ENCODE measurements at regions of chr17 and their contacts with region 1.

Region 1: DNA sequence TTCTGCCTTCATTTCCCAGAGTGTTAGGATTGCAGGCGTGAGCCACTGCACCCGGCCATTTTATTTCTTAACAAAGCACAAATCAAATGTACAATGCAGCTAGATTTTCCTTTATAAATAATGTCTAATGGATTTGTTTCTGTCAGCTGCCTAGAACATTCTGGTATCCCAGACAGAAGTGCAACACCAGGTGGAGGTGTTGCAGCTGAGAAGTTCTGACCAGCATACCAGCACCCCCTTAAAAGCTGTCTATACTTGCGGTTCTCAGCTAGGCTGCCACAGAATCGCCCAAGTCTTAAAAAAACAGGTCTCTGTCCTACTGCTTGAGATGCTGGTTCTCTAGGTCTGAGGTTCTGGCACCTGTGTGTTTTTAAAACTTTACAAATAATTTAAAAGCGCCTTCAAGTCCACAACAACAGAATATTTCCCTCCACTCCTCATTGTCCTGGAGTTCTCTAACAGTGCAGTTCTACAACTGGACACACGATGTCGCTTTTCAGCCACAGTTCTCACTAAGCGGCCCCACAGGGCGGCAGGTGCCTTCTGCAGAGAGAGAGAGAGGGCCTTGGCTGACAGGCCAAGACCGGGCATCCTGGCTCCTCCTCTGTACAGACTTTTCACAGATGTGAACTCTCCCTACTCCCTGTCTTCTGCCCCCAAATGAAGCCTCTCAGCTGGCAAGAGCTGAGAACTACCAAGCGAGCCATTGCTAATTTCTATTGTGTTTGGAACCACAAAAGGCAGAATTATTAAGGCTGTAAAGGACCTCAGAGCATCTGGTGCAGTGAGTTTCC is 32.6 kb upstream of the MEOX1 start:
- DNase-seq: no peak
- ATAC-seq: peak; percentile 92
- H3K4me3 ChIP-seq: no peak overlapping the region
- H3K27ac ChIP-seq: no peak overlapping the region
- H3K4me1 ChIP-seq: no peaks in the 10 kb centered on the region
- H3K27me3 ChIP-seq: peaks cover 0 to 2% of the 10 kb centered on the region in 2 experiments; a peak in 1 of 4 replicates
- CTCF ChIP-seq: peak; percentile 84 to 98 (median 92); a peak in 5 of 6 replicates
- EP300 ChIP-seq: no peak
- POLR2A ChIP-seq: no peak
- RAD21 ChIP-seq: peak; percentile 99

Region 2: GRCh38 chr17:43530278-43531081 is 163.8 kb before region 1 on chr17:
- CTCF ChIA-PET with region 1: no interaction called
- POLR2A ChIA-PET with region 1: no interaction called
- RAD21 ChIA-PET with region 1: no interaction called
- SMC1A ChIA-PET with region 1: no interaction called
- in situ Hi-C with region 1: no loop called
- intact Hi-C with region 1: no loop called
- DNase-seq: no peak
- ATAC-seq: no peak
- H3K4me3 ChIP-seq: no peak overlapping the region
- H3K27ac ChIP-seq: no peak overlapping the region
- H3K4me1 ChIP-seq: no peaks in the 10 kb centered on the region
- H3K27me3 ChIP-seq: no peaks in the 10 kb centered on the region
- CTCF ChIP-seq: no peak
- EP300 ChIP-seq: no peak
- POLR2A ChIP-seq: no peak
- RAD21 ChIP-seq: no peak

Region 3: DNA sequence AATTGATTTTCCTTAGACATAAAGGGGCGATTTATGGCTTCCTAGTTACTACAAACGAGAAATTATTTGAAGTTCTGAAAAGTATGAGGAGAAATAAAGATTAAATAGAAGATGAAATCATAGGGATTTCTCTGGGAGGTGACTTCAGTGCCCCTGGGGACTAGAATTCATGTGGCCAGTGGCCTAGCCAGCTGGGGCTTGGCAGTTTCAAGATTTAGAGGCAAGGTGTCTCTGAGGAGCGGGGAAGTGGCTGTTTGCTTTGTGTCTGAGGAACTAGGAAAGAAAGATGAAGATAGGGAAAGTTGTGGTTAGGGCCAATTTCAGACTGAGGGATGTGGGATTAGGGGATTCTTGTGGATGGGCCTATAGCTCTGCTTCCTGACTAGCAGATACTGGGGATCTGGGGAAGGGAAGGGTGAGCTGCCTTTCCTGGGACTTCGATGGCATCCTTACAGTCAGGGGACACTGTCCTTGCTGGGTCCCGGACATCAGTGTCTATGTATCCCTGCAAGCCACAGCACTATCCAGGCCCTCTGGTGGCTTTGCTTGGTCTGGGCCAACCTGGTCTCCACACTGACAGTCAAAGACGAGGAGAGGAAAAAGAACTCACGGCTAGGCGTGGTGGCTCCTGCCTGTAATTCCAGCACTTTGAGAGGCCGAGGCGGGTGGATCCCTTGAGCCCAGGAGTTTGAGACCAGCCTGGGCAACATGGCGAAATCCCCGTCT is 10.2 kb before region 1 on chr17:
- CTCF ChIA-PET with region 1: interaction called, 16 read pairs
- POLR2A ChIA-PET with region 1: no interaction called
- RAD21 ChIA-PET with region 1: interaction called, 6 read pairs
- SMC1A ChIA-PET with region 1: interaction called, 8 read pairs
- in situ Hi-C with region 1: no loop called
- intact Hi-C with region 1: no loop called
- DNase-seq: no peak
- ATAC-seq: no peak
- H3K4me3 ChIP-seq: no peak overlapping the region
- H3K27ac ChIP-seq: no peak overlapping the region
- H3K4me1 ChIP-seq: no peaks in the 10 kb centered on the region
- H3K27me3 ChIP-seq: peaks cover 0 to 5% of the 10 kb centered on the region in 2 experiments; a peak in 2 of 4 replicates
- CTCF ChIP-seq: no peak
- EP300 ChIP-seq: no peak
- POLR2A ChIP-seq: no peak
- RAD21 ChIP-seq: no peak

Region 4: DNA sequence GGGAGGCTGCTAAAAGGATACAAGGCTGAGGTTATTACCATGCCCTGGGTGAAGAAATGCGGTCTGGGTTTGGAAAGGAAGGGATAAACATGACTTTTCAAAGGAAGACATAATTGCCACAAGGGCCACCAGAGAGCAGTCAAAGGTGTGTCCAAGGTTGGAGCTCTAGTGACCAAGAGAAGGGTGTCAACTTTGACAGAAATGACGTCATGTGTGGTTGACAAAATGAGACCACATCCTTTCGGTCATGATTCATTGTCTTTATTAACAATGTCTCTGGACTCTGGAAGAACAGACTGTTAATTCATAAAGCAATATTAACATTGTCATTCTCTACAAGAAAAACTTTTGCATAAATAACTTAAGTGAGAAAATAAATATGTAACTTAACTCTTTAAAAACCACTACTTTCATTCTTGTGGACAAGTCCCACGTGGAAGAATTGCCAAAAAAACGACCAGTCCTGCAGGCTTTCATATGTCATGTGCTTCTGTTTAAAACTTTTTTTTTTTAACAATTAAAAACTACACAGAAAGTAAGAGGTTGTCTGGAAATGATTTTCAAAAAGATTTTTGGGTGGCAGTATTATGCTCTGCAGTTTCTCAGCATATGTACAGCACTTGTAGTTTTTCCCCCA is 59.3 kb after region 1 on chr17:
- CTCF ChIA-PET with region 1: interaction called, 515 read pairs
- POLR2A ChIA-PET with region 1: interaction called, 3 read pairs
- RAD21 ChIA-PET with region 1: interaction called, 171 read pairs
- SMC1A ChIA-PET with region 1: interaction called, 171 read pairs
- in situ Hi-C with region 1: no loop called
- intact Hi-C with region 1: no loop called
- DNase-seq: peak; percentile 41
- ATAC-seq: peak; percentile 94
- H3K4me3 ChIP-seq: no peak overlapping the region
- H3K27ac ChIP-seq: no peak overlapping the region
- H3K4me1 ChIP-seq: no peaks in the 10 kb centered on the region
- H3K27me3 ChIP-seq: peaks cover 5 to 6% of the 10 kb centered on the region in 2 experiments
- CTCF ChIP-seq: 0 out of 6 replicates have a peak, but pooled peaks of 1 of the 3 experiments have one; percentile 4
- EP300 ChIP-seq: peak in 1 of 2 experiments; percentile 77; a peak in 1 of 4 replicates
- POLR2A ChIP-seq: no peak
- RAD21 ChIP-seq: no peak

Region 5: DNA sequence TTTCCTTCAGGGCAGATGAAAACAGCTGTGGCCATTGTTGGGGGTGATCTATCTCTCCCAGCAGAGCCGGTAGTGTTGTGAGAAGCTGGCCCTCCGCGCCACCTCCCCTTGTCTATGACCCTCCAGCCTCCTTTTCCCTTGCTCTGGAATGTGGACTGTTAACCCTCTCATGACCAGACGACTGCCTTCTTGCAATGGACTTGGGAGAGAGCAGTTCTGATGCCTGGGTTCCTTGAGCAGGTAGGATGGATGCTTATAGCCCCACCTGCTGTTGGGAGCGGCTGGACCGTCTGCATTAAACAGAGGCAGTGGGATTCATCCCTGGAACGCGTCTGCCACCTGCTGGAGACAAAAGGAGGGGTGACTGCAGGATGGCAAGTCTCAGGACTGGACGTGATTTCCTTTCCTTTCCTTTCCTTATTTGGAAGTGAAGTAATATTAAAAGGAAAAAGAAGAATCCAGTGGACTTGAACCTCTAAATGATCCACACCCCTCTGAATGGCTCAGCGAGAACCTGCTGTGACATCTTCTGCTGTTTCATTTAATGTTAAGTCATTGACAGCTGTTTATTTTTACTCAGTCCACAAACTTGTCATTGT is 66.1 kb after region 1 on chr17:
- CTCF ChIA-PET with region 1: interaction called, 515 read pairs
- POLR2A ChIA-PET with region 1: interaction called, 3 read pairs
- RAD21 ChIA-PET with region 1: interaction called, 171 read pairs
- SMC1A ChIA-PET with region 1: interaction called, 171 read pairs
- in situ Hi-C with region 1: loop called (anchors 5 kb)
- intact Hi-C with region 1: loop called (anchors 1 kb)
- DNase-seq: peak; percentile 53
- ATAC-seq: peak; percentile 96
- H3K4me3 ChIP-seq: no peak overlapping the region
- H3K27ac ChIP-seq: no peak overlapping the region
- H3K4me1 ChIP-seq: no peaks in the 10 kb centered on the region
- H3K27me3 ChIP-seq: peaks cover 5 to 6% of the 10 kb centered on the region in 2 experiments
- CTCF ChIP-seq: peak; percentile 95 to 100 (median 100); a peak in 5 of 6 replicates
- EP300 ChIP-seq: no peak
- POLR2A ChIP-seq: no peak
- RAD21 ChIP-seq: peak; percentile 96

Region 6: GRCh38 chr17:43766413-43767052 is 72.3 kb after region 1 on chr17:
- CTCF ChIA-PET with region 1: interaction called, 515 read pairs
- POLR2A ChIA-PET with region 1: interaction called, 3 read pairs
- RAD21 ChIA-PET with region 1: interaction called, 171 read pairs
- SMC1A ChIA-PET with region 1: interaction called, 171 read pairs
- in situ Hi-C with region 1: loop called (anchors 5 kb)
- intact Hi-C with region 1: no loop called
- DNase-seq: no peak
- ATAC-seq: no peak
- H3K4me3 ChIP-seq: no peak overlapping the region
- H3K27ac ChIP-seq: no peak overlapping the region
- H3K4me1 ChIP-seq: peaks cover 7% of the 10 kb centered on the region
- H3K27me3 ChIP-seq: no peaks in the 10 kb centered on the region; a peak in 1 of 4 replicates
- CTCF ChIP-seq: peak; percentile 70 to 79 (median 78)
- EP300 ChIP-seq: no peak
- POLR2A ChIP-seq: no peak
- RAD21 ChIP-seq: peak; percentile 19; the same call in 1 of the 2 replicates

Region 7: GRCh38 chr17:43846221-43846712 is 152.0 kb after region 1 on chr17:
- CTCF ChIA-PET with region 1: interaction called, 20 read pairs
- POLR2A ChIA-PET with region 1: interaction called, 5 read pairs
- RAD21 ChIA-PET with region 1: interaction called, 4 read pairs
- SMC1A ChIA-PET with region 1: interaction called, 3 read pairs
- in situ Hi-C with region 1: no loop called
- intact Hi-C with region 1: loop called (anchors 5 kb)
- DNase-seq: no peak
- ATAC-seq: peak; percentile 99
- H3K4me3 ChIP-seq: no peak overlapping the region
- H3K27ac ChIP-seq: no peak overlapping the region
- H3K4me1 ChIP-seq: no peaks in the 10 kb centered on the region
- H3K27me3 ChIP-seq: no peaks in the 10 kb centered on the region
- CTCF ChIP-seq: peak; percentile 89 to 99 (median 97); a peak in 5 of 6 replicates
- EP300 ChIP-seq: no peak
- POLR2A ChIP-seq: no peak
- RAD21 ChIP-seq: peak; percentile 67

Measured in GM12878 (cell line).